Keratinocyte (primary cell): ENCODE measurements at regions of chr7 and their contacts with region 1.

Region 1: DNA sequence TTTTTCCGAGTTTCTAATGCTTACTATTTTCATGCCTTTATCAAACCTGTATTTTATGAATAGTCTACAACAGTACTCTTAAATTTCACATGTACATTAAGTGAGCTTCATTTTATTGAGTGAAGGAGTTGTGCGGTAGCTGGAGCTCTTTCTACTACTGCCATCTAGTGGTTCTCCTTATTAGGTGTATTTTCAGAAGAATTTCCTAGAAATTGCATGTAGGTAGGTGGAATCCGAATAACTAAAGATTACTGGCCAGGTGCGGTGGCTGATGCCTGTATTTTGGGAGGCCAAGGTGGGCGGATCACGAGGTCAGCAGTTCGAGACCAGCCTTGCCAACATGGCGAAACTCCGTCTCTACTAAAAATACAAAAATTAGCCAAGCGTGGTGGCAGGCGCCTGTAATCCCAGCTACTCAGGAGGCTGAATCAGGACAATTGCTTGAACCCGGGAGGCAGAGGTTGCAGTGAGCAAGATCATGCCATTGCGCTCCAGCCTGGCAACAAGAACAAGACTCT is 38.3 kb downstream of the LRRC72 start:
- DNase-seq: peak; percentile 7
- H3K4me3 ChIP-seq: no peak overlapping the region
- H3K27ac ChIP-seq: no peak overlapping the region
- H3K4me1 ChIP-seq: no peaks in the 10 kb centered on the region
- H3K27me3 ChIP-seq: no peaks in the 10 kb centered on the region
- CTCF ChIP-seq: peak; percentile 3 to 61 (median 51)

Region 2: GRCh38 chr7:16129431-16130116 is 435.4 kb before region 1 on chr7:
- dilution Hi-C with region 1: loop called (anchors 10 kb)
- DNase-seq: peak; percentile 7
- H3K4me3 ChIP-seq: no peak overlapping the region
- H3K27ac ChIP-seq: no peak overlapping the region
- H3K4me1 ChIP-seq: no peaks in the 10 kb centered on the region
- H3K27me3 ChIP-seq: no peaks in the 10 kb centered on the region
- CTCF ChIP-seq: no peak